ENCODE measurements at regions of chr2 and their contacts with region 1.

Region 1: DNA sequence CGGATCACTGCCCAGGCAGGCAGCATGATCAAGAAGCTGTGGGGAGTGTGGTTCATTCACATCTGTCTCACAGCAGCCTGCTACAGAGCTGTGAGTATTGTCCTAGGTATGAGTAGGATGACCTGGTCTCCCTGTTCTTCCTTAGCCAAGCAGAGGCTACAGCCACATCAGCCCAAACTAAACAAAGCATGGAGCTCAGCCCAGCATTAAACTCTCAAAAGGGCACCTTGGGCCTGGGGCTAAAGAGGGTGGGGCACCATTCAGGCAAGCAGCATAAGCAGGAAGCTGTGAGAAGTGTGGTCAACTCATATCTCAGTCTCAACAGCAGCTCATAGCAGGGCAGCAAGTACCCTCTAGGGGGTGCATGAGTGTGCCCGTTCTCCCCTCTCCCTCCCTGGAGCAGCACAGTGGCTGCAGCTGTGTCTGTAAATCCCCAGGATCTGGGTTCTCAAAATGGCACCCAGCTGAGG is 139.6 kb downstream of the TRABD2A start:
- DNase-seq: peak; percentile 70
- H3K4me3 Mint-ChIP-seq: no peak overlapping the region
- H3K27ac Mint-ChIP-seq: peak overlapping the region; percentile 66
- H3K4me1 Mint-ChIP-seq: peaks cover 12% of the 10 kb centered on the region
- H3K27me3 Mint-ChIP-seq: peaks cover 4% of the 10 kb centered on the region

Region 2: DNA sequence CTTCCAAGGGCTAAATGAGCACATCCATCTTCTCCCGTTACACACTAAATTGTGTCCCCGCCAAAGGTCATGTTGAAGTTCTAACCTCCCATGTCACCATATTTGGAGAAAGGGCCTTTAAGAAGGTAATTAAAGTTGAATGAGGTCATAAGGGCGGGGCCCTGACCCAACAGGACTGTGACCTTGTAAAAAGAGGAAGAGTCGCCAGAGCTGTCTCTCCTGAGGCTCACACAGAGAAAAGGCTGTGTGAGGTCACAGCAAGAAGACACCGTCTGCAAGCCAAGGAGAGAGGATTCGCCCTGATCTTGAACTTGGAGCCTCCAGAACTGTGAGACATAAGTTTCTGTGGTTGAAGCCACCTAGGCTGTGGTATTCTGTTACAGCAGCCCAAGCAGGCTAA is 115.5 kb after region 1 on chr2:
- CTCF ChIA-PET with region 1: interaction called, 15 read pairs
- POLR2A ChIA-PET with region 1: no interaction called
- DNase-seq: peak; percentile 58
- H3K4me3 Mint-ChIP-seq: no peak overlapping the region
- H3K27ac Mint-ChIP-seq: peak overlapping the region; percentile 70
- H3K4me1 Mint-ChIP-seq: peaks cover 77% of the 10 kb centered on the region
- H3K27me3 Mint-ChIP-seq: no peaks in the 10 kb centered on the region

Region 3: DNA sequence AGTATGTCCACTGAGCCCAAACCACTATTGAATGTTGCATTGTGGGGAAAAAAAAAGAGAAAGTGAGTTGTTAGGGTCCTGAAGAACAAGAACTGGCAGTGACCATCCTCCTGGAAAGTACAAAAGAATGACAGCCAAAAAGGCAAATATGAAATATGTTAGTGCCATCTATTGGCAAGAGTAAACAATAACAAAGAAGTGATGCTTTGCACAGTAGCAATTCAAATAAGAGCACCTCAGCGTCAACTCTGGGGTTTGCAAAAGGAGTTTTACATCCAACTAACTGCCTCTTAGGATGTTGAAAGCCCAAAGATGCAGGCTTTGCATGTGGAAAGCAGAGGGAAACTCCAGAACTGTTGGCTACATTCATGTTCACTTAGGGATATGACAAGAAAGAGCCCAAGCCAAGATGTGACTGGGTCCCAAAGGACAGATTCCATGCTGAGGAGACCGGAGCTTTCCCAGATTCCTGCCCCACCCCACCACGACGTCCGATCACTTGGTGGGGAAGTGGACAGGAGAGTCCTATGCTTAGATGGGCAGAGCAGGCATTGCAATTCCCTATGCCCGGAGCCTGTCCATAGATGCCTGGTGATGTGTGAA is 124.0 kb after region 1 on chr2:
- CTCF ChIA-PET with region 1: interaction called, 12 read pairs
- POLR2A ChIA-PET with region 1: no interaction called
- DNase-seq: no peak
- H3K4me3 Mint-ChIP-seq: no peak overlapping the region
- H3K27ac Mint-ChIP-seq: no peak overlapping the region
- H3K4me1 Mint-ChIP-seq: peaks cover 43% of the 10 kb centered on the region
- H3K27me3 Mint-ChIP-seq: no peaks in the 10 kb centered on the region